ENCODE measurements at regions of chr6 and their contacts with region 1.

Region 1: DNA sequence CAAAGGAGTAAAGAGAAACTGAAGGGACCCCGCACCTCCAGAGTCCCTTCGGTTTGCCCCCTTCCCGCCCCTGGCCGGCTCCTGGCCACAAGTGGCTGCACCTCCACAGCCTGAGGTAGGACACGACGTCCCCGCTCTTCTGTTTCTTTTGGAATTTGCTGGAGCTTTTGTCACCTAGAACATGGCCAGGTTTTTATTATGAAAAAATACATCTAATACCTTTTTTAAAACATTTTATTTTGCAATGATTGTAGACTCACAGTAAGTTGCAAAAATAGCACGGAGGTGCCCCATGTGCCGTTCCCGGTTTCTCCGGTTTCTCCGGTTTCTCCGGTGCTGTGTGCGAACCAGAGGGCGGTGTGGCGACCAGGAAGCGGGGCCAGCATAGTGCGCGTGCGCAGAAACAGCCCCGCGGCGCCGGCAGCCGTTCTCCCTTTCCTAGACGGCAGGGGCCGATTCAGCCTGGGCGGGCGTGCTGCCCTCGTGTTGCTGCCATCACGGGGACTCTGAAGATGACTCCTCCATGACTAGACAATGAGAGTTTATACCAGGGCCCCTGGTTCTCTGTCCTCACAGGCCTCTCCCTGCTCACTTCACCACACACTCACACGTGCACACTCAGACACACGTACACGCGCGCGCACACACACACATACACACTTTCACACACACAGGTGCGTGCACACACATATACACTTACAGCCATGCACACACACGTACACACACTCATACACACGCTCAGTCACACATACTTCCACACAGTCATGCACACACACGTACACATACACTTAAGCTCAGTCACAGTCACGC is 102.1 kb downstream of the TMEM242 start:
- DNase-seq: peak in 1 of 2 donors; percentile 91
- H3K4me3 ChIP-seq: peak overlapping the region; percentile 38 to 56
- H3K27ac ChIP-seq: peak overlapping the region; percentile 76 to 87
- H3K4me1 ChIP-seq: peaks cover 14 to 53% of the 10 kb centered on the region in 2 donors
- H3K27me3 ChIP-seq: no peaks in the 10 kb centered on the region
- CTCF ChIP-seq: peak in 2 of 3 experiments; percentile 19 to 37

Region 2: DNA sequence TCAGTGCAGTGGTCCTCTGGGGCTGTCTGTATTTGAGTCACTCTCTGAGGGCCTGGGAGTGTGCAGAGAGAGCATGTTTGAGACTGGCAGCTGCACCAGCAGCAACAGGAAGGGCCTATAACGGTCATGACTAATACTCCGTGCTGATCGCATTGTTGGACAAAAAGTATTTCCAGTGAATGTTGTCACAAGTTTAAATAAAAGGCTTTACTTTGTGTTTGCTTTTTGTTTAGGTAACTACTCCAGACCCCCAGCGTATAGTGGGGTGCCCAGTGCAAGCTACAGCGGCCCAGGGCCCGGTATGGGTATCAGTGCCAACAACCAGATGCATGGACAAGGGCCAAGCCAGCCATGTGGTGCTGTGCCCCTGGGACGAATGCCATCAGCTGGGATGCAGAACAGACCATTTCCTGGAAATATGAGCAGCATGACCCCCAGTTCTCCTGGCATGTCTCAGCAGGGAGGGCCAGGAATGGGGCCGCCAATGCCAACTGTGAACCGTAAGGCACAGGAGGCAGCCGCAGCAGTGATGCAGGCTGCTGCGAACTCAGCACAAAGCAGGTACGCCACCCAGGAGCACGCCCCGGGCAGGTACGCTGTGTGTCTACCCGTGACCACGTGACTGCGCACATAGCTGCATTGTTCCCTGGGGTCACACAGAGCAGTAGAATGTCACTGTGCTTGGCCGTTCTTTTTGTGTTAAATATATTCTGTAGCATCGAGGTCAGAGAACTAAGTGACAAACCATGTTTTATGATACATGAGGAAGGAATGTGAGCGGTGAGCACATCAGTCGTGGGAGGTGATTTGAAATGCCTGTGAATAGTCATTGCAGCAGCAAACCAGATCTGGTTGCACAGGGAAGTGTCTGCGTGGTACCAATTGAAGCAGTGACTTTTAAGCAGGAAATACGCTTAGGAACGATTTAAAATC is 72.6 kb before region 1 on chr6:
- intact Hi-C with region 1: loop called (anchors 5 kb)
- DNase-seq: peak; percentile 42 to 89
- H3K4me3 ChIP-seq: peak overlapping the region; percentile 28 to 33
- H3K27ac ChIP-seq: peak overlapping the region; percentile 87 to 88
- H3K4me1 ChIP-seq: peaks cover 19 to 51% of the 10 kb centered on the region in 2 donors
- H3K27me3 ChIP-seq: no peaks in the 10 kb centered on the region
- CTCF ChIP-seq: no peak

Region 3: DNA sequence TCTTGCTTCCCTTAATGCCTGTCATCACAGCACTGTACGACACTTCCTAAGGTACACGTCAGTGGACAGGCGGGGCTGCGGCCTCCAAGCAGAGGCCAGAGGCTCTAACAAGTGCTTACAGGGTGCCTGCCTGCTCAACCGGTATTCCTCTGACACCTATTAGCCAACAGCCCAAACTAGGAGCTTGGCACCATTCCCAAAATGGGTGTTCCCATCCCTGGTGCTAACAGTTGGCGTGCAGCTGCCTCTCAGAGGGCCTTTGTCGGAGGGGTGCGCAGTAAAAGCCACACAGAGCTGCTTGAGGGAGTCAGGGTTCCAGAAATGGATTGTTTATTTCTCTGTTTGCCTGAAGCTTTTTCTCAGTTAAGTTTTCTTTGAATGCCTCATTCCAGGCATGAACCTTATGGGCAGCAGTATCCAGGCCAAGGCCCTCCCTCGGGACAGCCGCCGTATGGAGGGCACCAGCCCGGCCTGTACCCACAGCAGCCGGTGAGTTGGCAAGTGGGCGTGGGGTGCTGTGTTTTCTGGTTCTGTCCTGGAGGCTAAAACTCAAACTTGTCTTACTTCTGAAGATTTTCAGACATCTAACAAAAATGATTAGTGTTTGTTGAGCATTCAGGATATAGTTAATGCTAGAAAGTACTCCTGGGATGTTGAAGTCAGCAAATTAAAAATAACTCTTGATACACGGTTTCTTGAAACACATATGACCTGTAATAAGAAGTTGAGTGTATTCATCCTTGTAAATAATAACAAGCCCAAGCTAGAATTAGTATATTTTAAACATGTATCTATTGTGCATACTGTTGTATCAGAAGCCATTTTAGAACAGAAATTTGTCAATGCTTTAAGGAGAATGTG is 22.6 kb before region 1 on chr6:
- intact Hi-C with region 1: loop called (anchors 2 kb)
- DNase-seq: peak; percentile 67 to 93
- H3K4me3 ChIP-seq: peak overlapping the region; percentile 36 to 51
- H3K27ac ChIP-seq: peak overlapping the region; percentile 78 to 89
- H3K4me1 ChIP-seq: peaks cover 3 to 9% of the 10 kb centered on the region in 2 donors
- H3K27me3 ChIP-seq: no peaks in the 10 kb centered on the region
- CTCF ChIP-seq: no peak

Region 4: GRCh38 chr6:157235600-157236039 is 14.4 kb after region 1 on chr6:
- intact Hi-C with region 1: loop called (anchors 2 kb)
- DNase-seq: peak; percentile 45 to 88
- H3K4me3 ChIP-seq: peak overlapping the region; percentile 59 to 64
- H3K27ac ChIP-seq: peak overlapping the region; percentile 96
- H3K4me1 ChIP-seq: peaks cover 7 to 28% of the 10 kb centered on the region in 2 donors
- H3K27me3 ChIP-seq: no peaks in the 10 kb centered on the region
- CTCF ChIP-seq: peak; percentile 81 to 87 (median 87)

Region 5: DNA sequence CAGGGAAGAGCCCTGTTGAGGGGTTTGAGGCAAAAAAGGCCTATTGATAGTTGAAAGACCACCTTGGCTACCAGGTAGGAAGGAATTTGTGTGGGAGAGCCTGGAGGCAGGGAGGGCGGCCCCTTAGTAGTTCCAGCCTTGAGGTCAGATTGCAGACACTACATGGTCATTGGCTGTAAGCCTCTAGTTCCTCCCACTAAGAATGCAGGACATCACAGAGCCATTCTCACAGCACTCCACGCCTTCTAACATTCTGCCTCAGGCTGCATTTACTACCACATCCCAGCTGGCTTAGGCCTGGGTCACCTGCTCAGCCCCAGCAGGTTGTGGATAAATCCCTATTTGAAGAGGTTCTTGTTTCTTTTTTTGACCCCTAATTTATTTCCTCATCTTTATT is 510.8 kb after region 1 on chr6:
- intact Hi-C with region 1: no loop called
- DNase-seq: no peak
- H3K4me3 ChIP-seq: no peak overlapping the region
- H3K27ac ChIP-seq: no peak overlapping the region
- H3K4me1 ChIP-seq: no peaks in the 10 kb centered on the region
- H3K27me3 ChIP-seq: no peaks in the 10 kb centered on the region
- CTCF ChIP-seq: no peak